Activated CD4-positive, alpha-beta T cell treated with anti-CD3 and anti-CD28 coated beads for 36 hours (primary cell): ENCODE measurements at regions of chr13 and their contacts with region 1.

Region 1: DNA sequence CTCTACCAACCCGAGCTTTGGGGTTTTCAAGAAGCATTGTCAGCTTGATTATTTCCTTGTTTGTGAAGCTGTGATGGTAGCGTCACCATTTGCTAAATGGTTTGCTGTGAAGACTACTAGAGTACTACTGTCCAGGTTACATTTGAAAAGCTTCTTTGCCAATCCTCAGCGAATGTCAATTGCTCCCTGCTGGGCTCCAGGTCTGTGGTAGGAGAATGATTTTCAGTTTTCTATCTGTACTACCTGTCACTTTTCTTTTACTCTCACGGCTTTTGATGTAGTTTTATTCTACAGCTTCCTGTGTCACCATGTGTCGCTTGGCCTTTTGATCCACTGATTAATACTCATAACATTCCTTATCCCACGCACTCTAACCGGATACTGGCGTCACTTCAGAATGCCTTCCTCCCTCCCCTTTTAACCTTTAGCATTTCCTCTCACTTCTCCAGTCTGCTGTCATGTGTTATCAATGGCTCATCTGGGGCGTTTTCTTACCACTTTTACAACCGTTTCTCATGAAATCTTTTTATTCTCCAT is 7.5 kb upstream of the GPR183 start:
- DNase-seq: peak; percentile 85
- ATAC-seq: peak; percentile 76
- H3K4me3 Mint-ChIP-seq: peak overlapping the region; percentile 60
- H3K27ac Mint-ChIP-seq: peak overlapping the region; percentile 96
- H3K4me1 Mint-ChIP-seq: peaks cover 88% of the 10 kb centered on the region
- H3K27me3 Mint-ChIP-seq: no peaks in the 10 kb centered on the region

Region 2: GRCh38 chr13:98959786-98960605 is 354.7 kb before region 1 on chr13:
- CTCF ChIA-PET with region 1: no interaction called
- POLR2A ChIA-PET with region 1: no interaction called
- intact Hi-C with region 1: no loop called
- DNase-seq: no peak
- ATAC-seq: no peak
- H3K4me3 Mint-ChIP-seq: no peak overlapping the region
- H3K27ac Mint-ChIP-seq: no peak overlapping the region
- H3K4me1 Mint-ChIP-seq: peaks cover 18% of the 10 kb centered on the region
- H3K27me3 Mint-ChIP-seq: no peaks in the 10 kb centered on the region

Region 3: GRCh38 chr13:99425485-99426341 is 111.0 kb after region 1 on chr13:
- CTCF ChIA-PET with region 1: interaction called, 3 read pairs
- POLR2A ChIA-PET with region 1: interaction called, 3 read pairs
- intact Hi-C with region 1: loop called in 1 of 2 experiments (anchors 2 kb)
- DNase-seq: peak; percentile 80
- ATAC-seq: peak; percentile 37
- H3K4me3 Mint-ChIP-seq: peak overlapping the region; percentile 65
- H3K27ac Mint-ChIP-seq: peak overlapping the region; percentile 93
- H3K4me1 Mint-ChIP-seq: peaks cover 67% of the 10 kb centered on the region
- H3K27me3 Mint-ChIP-seq: no peaks in the 10 kb centered on the region